ENCODE measurements at regions of chr1 and their contacts with region 1.

Region 1: DNA sequence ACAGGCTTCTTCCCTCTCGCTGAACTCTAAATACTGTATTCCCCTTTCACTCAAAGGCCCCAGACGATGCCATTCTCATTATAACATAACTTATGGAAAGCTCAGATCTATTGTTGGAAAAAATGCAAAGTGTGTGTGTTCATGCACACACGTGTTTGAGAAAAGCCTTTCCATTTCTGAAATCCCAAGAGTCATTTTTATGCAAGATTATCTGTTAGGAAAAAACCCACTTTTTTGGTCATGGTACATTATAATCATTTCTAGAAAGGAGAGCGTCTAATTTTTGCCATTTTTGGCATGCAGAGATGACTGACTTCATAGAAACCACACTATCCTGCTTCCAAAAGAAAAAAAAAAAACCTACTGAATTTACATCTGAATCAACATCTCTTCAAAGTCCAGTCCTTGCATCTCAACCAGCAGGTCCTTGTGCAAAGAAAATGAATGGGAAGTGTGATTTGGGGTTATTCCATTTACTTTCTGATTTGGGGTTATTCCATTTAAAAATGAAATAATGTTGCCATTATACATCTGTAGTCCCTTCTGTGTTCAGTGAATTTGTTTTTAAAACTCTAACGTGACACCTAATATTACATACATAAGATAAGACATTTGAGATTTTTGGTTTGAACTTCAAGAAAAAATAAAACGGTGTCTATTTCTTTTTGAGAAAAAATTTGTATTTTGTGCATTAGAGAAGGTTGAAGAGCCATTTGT is 150.3 kb downstream of the DHRS3 start:
- DNase-seq: no peak
- H3K4me3 Mint-ChIP-seq: no peak overlapping the region
- H3K27ac Mint-ChIP-seq: peak overlapping the region; percentile 89
- H3K4me1 Mint-ChIP-seq: peaks cover 39% of the 10 kb centered on the region
- H3K27me3 Mint-ChIP-seq: no peaks in the 10 kb centered on the region

Region 2: GRCh38 chr1:12296623-12297022 is 171.1 kb before region 1 on chr1:
- intact Hi-C with region 1: loop called (anchors 2 kb)
- DNase-seq: no peak
- H3K4me3 Mint-ChIP-seq: peak overlapping the region; percentile 50
- H3K27ac Mint-ChIP-seq: peak overlapping the region; percentile 72
- H3K4me1 Mint-ChIP-seq: peaks cover 46% of the 10 kb centered on the region
- H3K27me3 Mint-ChIP-seq: no peaks in the 10 kb centered on the region

Measured in activated T-helper 1 cell treated with anti-CD3 and anti-CD28 coated beads, Interleukin-12 subunit alpha, Interleukin-12 subunit beta, Interleukin-2, Interleukin-4 antibody, amounts not matched to agents 30 ng/mL and 10 ng/mL and 1 ng/mL, durations not matched to agents 14 hours and 24 hours and 36 hours (primary cell).